CD8-positive, alpha-beta T cell (primary cell): ENCODE measurements at regions of chr1 and their contacts with region 1.

Region 1: GRCh38 chr1:88877382-88877825 is 14.0 kb downstream of the GTF2B start:
- DNase-seq: peak in 2 of 9 experiments; percentile 27 to 45
- ATAC-seq: no peak
- H3K4me3 ChIP-seq: no peak overlapping the region
- H3K4me3 Mint-ChIP-seq: no peak overlapping the region
- H3K27ac ChIP-seq: no peak overlapping the region
- H3K27ac Mint-ChIP-seq: no peak overlapping the region
- H3K4me1 ChIP-seq: peaks cover 25% of the 10 kb centered on the region
- H3K4me1 Mint-ChIP-seq: peaks cover 60% of the 10 kb centered on the region
- H3K27me3 ChIP-seq: no peaks in the 10 kb centered on the region
- H3K27me3 Mint-ChIP-seq: no peaks in the 10 kb centered on the region
- CTCF ChIP-seq: peak; percentile 89

Region 2: DNA sequence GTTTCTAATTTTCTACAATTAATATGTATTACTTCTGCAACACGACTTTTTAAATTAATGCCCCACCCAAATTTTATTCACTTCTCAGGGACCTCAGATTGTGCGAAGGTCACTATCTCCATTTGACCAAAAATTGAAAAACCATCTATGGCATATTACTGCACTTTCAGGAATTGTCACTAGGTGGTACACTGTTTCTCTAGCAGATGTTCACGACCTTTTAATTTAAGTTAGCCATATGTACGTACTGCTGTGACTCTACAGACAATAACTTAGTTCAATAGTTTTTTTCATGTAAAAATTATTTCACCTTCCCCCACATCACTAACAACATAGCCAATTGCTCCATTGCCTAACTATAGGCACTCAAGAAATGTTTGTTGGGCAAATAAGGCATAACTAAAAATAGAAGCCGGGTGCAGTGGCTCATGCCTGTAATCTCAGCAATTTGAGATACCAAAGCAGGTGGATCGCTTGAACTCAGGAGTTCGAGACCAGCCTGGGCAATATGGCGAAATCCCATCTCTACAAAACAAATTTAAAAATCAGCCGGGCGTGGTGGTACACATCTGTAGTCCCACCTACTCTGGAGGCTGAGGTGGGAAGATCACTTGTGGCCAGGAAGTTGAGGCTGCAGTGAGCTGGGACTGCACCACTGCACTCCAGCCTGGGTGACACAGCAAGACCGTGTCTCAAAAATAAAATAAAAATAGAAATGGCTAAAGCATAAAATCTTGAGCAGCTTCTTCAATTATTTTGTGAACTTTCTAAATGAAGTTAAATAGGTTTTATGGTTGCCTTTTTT is 269.1 kb before region 1 on chr1:
- CTCF ChIA-PET with region 1: no interaction called
- POLR2A ChIA-PET with region 1: no interaction called
- intact Hi-C with region 1: loop called (anchors 2 to 5 kb)
- DNase-seq: peak in 2 of 9 experiments; percentile 28 to 49
- ATAC-seq: peak; percentile 56
- H3K4me3 ChIP-seq: no peak overlapping the region
- H3K4me3 Mint-ChIP-seq: no peak overlapping the region
- H3K27ac ChIP-seq: no peak overlapping the region
- H3K27ac Mint-ChIP-seq: no peak overlapping the region
- H3K4me1 ChIP-seq: no peaks in the 10 kb centered on the region
- H3K4me1 Mint-ChIP-seq: peaks cover 4% of the 10 kb centered on the region
- H3K27me3 ChIP-seq: no peaks in the 10 kb centered on the region
- H3K27me3 Mint-ChIP-seq: peaks cover 2% of the 10 kb centered on the region
- CTCF ChIP-seq: peak; percentile 63

Region 3: GRCh38 chr1:88655685-88656299 is 221.6 kb before region 1 on chr1:
- CTCF ChIA-PET with region 1: interaction called, 33 read pairs
- POLR2A ChIA-PET with region 1: no interaction called
- intact Hi-C with region 1: loop called (anchors 1 kb)
- DNase-seq: peak in 2 of 9 experiments; percentile 44 to 59
- ATAC-seq: no peak
- H3K4me3 ChIP-seq: no peak overlapping the region
- H3K4me3 Mint-ChIP-seq: no peak overlapping the region
- H3K27ac ChIP-seq: no peak overlapping the region
- H3K27ac Mint-ChIP-seq: no peak overlapping the region
- H3K4me1 ChIP-seq: peaks cover 8% of the 10 kb centered on the region
- H3K4me1 Mint-ChIP-seq: peaks cover 12% of the 10 kb centered on the region
- H3K27me3 ChIP-seq: peaks cover 0 to 2% of the 10 kb centered on the region in 2 experiments
- H3K27me3 Mint-ChIP-seq: no peaks in the 10 kb centered on the region
- CTCF ChIP-seq: peak; percentile 82

Region 4: DNA sequence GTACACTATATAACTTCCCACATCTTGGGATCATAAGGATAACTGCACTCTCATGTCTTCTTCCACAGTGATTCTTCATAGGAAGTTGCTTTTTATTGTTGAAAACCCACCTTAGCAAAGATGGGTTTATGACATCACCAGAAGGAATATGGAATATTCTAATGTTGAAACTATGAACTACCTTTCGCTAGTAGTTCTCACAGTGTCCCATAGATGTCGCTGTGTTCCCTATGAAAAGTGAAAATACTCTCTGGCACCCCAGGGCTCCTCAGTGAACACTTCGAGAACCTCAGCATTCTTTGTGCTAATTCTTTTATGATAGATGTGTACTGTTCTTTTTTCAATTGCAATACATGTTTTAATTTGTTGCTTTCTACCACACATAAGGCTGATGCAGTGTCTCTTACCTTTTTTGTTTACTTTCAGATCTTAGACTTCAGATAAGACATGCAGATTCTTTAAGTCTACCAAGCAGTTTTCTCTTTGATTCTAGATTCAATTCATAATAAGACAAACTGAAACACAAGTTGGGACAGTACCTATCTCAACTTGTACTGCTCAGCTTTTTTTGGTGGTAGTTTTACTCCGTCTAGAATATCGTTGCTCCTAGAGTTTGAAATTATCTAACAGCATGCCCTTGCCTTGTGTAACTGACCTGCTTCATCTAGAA is 76.9 kb before region 1 on chr1:
- CTCF ChIA-PET with region 1: interaction called, 3 read pairs
- POLR2A ChIA-PET with region 1: no interaction called
- intact Hi-C with region 1: loop called (anchors 2 to 10 kb)
- DNase-seq: peak in 6 of 9 experiments; percentile 7 to 64 (median 30)
- ATAC-seq: peak; percentile 75
- H3K4me3 ChIP-seq: no peak overlapping the region
- H3K4me3 Mint-ChIP-seq: no peak overlapping the region
- H3K27ac ChIP-seq: no peak overlapping the region
- H3K27ac Mint-ChIP-seq: no peak overlapping the region
- H3K4me1 ChIP-seq: no peaks in the 10 kb centered on the region
- H3K4me1 Mint-ChIP-seq: peaks cover 10% of the 10 kb centered on the region
- H3K27me3 ChIP-seq: no peaks in the 10 kb centered on the region
- H3K27me3 Mint-ChIP-seq: no peaks in the 10 kb centered on the region
- CTCF ChIP-seq: peak; percentile 74